MCF 10A (cell line): ENCODE measurements at regions of chr12 and their contacts with region 1.

Region 1: DNA sequence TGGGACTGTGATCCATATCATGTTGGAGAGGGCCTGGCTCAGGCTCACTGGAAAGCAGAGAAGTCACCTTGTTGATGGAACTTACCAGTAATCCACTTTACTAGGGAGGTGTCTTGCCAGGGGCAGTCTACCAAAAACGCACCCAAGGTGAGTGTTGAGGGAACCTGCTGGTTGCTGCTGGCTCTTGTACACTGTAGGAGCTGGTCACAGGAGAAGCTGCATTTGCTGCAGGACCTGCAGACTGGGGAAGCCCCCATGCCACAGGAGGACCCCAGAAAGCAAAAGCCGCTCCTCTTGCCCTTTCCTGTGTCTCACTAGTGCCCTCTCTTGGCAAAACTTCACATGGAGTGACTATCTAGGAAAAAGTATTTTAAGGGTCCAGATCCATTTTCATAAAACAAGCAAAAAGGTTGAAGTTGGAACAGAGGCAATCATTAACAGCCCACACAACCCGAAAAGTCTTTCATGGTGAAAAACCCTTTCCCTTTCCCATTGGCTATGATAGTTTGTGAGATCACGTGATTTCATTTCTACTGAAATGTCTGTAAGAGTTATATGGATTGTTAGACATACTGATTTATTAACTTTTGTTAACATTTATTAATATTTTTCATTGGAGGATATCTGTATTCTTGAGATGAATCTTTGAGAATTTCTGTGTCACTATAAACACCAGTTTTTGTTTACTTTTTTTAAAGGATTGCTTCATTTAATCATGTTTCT is 59.2 kb downstream of the RASSF8 start:
- DNase-seq: peak; percentile 63
- H3K4me3 Mint-ChIP-seq: no peak overlapping the region
- H3K27ac Mint-ChIP-seq: no peak overlapping the region
- H3K4me1 Mint-ChIP-seq: peaks cover 17% of the 10 kb centered on the region
- H3K27me3 Mint-ChIP-seq: no peaks in the 10 kb centered on the region
- CTCF ChIP-seq: peak; percentile 73

Region 2: DNA sequence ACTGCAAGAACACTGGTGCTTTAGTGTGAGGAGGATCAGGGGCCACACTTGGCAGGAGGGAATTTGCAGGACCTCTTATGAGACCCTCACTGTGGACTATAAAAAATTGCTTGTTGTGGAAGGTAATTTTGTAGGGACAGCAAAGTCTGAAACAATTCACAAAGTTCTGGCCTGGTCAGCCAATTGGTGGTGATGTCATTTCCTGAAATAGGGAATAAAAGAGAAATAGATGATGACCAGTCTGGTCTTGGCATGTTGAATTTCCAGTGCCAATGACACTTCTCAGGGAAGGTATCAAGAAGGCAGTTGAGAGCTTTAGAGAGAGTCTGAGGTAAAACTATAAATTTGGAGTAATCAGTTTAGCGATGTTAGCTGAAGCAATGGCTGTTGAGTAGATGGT is 335.2 kb before region 1 on chr12:
- CTCF ChIA-PET with region 1: interaction called, 4 read pairs
- POLR2A ChIA-PET with region 1: no interaction called
- intact Hi-C with region 1: loop called (anchors 5 kb)
- DNase-seq: no peak
- H3K4me3 Mint-ChIP-seq: no peak overlapping the region
- H3K27ac Mint-ChIP-seq: no peak overlapping the region
- H3K4me1 Mint-ChIP-seq: peaks cover 7% of the 10 kb centered on the region
- H3K27me3 Mint-ChIP-seq: no peaks in the 10 kb centered on the region
- CTCF ChIP-seq: no peak

Region 3: GRCh38 chr12:25884024-25884919 is 133.4 kb before region 1 on chr12:
- CTCF ChIA-PET with region 1: no interaction called
- POLR2A ChIA-PET with region 1: no interaction called
- intact Hi-C with region 1: no loop called
- DNase-seq: no peak
- H3K4me3 Mint-ChIP-seq: no peak overlapping the region
- H3K27ac Mint-ChIP-seq: no peak overlapping the region
- H3K4me1 Mint-ChIP-seq: no peaks in the 10 kb centered on the region
- H3K27me3 Mint-ChIP-seq: no peaks in the 10 kb centered on the region
- CTCF ChIP-seq: no peak